Ovary (tissue), 10 donors: ENCODE measurements at regions of chr9 and their contacts with region 1.

Region 1: GRCh38 chr9:73183917-73184861 is 32.5 kb downstream of the ANXA1 start:
- DNase-seq: no peak
- H3K4me3 ChIP-seq: no peak overlapping the region
- H3K27ac ChIP-seq: no peak overlapping the region
- H3K4me1 ChIP-seq: no peaks in the 10 kb centered on the region
- H3K27me3 ChIP-seq: no peaks in the 10 kb centered on the region
- CTCF ChIP-seq: peak in 2 of 3 donors; percentile 33 to 49
- EP300 ChIP-seq: no peak
- POLR2A ChIP-seq: no peak

Region 2: DNA sequence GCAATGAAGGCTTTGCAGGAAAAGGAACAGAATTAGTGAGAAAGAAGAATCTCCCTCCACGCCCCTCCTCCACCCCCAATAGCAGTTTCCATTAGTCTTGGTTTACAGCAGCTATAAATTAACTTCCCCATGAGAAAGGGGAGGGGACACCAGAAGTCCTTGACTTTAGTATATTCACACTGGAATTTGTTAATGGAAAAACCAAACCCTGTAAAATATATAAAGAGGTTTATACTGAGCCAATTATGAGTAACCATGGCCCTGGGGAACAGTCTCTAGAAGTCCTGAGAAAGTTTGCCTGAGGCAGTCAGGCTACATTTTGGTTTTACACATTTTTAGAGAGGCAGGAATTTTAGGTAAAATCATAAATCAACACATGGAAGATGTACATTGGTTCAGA is 319.9 kb before region 1 on chr9:
- intact Hi-C with region 1: loop called in 1 of 4 experiments (anchors 10 kb)
- DNase-seq: no peak
- H3K4me3 ChIP-seq: no peak overlapping the region
- H3K27ac ChIP-seq: no peak overlapping the region
- H3K4me1 ChIP-seq: no peaks in the 10 kb centered on the region
- H3K27me3 ChIP-seq: no peaks in the 10 kb centered on the region
- CTCF ChIP-seq: no peak
- EP300 ChIP-seq: no peak
- POLR2A ChIP-seq: no peak

Region 3: GRCh38 chr9:73034962-73035361 is 149.2 kb before region 1 on chr9:
- intact Hi-C with region 1: no loop called
- DNase-seq: no peak
- H3K4me3 ChIP-seq: no peak overlapping the region
- H3K27ac ChIP-seq: no peak overlapping the region
- H3K4me1 ChIP-seq: peaks cover 7% of the 10 kb centered on the region
- H3K27me3 ChIP-seq: no peaks in the 10 kb centered on the region
- CTCF ChIP-seq: no peak
- EP300 ChIP-seq: no peak
- POLR2A ChIP-seq: no peak

Region 4: GRCh38 chr9:73104921-73105320 is 79.3 kb before region 1 on chr9:
- intact Hi-C with region 1: loop called in 3 of 4 experiments (anchors 5 to 10 kb)
- DNase-seq: no peak
- H3K4me3 ChIP-seq: no peak overlapping the region
- H3K27ac ChIP-seq: no peak overlapping the region
- H3K4me1 ChIP-seq: no peaks in the 10 kb centered on the region
- H3K27me3 ChIP-seq: no peaks in the 10 kb centered on the region
- CTCF ChIP-seq: no peak
- EP300 ChIP-seq: no peak
- POLR2A ChIP-seq: no peak

Region 5: DNA sequence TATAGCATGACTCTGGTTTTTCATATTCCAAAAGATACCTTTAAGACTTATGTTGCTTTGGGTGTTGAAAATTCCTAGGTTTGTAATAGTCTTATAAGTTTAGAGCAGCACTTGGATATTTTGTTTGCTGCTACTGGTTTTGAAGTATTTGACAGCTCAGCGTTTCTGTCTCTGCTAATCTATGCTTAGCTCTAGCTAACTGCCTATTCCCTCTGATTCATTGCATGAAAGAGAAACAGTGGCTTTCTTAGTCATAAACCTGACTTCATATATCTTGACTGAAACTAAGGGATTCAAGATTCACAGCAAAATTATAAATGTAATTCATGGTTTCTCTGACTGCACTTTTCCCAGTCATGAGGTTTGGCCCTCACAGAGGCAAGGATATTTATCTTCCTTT is 68.2 kb before region 1 on chr9:
- intact Hi-C with region 1: loop called in 2 of 4 experiments (anchors 5 to 10 kb)
- DNase-seq: no peak
- H3K4me3 ChIP-seq: no peak overlapping the region
- H3K27ac ChIP-seq: no peak overlapping the region
- H3K4me1 ChIP-seq: no peaks in the 10 kb centered on the region
- H3K27me3 ChIP-seq: no peaks in the 10 kb centered on the region
- CTCF ChIP-seq: no peak
- EP300 ChIP-seq: no peak
- POLR2A ChIP-seq: no peak